ENCODE measurements at regions of chr5 and their contacts with region 1.

Region 1: DNA sequence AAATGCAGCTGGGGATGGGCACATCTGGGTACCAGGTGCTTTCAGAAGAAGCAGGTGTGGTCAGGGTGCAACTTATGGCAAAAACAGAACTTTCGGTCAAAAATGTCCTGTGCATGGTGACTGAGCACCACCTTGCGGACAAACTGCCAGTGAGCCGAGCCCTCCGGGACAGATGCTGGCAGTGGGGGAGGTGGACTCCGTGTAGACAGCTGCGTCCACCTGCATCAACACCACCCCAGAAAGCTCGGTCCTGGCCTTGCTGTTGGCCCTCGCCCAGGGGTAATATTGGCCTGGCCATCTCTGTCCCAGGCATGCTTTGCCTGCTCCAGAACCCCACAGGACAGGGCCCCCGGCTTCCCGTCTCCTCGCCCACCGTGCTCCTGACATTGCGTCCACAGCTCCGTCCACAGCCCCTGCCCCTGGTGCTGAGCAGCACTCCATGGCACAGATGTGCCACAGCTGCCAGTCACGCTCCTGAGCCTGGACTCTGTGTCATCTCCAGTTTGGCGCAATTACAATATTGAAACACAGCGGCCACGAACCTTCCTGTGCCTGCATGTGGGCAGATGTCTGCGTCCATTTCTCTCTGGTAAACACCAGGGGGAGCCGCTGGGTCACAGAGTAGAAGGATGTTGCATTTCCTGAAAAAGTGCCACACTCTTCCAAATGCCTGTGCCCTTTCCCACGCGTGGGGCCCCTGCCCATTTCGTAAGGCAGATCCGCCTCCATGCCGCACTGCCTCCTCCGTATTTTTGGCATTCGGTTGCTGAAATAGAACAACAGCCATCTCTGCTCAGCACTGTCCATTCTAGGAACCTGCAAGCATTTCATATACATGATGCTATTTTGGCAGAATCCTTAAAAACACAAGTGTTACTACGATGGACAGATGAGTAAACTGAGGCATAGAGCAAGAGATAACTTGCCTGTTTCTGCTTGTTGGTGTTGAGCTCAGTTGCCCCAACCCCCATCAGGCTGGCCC is 33.4 kb upstream of the SLC6A19 start:
- DNase-seq: peak; percentile 57
- ATAC-seq: peak; percentile 95
- H3K4me3 ChIP-seq: peak overlapping the region; percentile 42 to 47
- H3K27ac ChIP-seq: no peak overlapping the region
- H3K4me1 ChIP-seq: peaks cover 0 to 10% of the 10 kb centered on the region in 2 experiments; a peak in 2 of 4 replicates
- H3K27me3 ChIP-seq: no peaks in the 10 kb centered on the region
- CTCF ChIP-seq: peak; percentile 64 to 89 (median 87)
- POLR2A ChIP-seq: no peak
- RAD21 ChIP-seq: peak; percentile 95

Region 2: GRCh38 chr5:442335-443238 is 725.4 kb before region 1 on chr5 and contains the start of gene EXOC3:
- CTCF ChIA-PET with region 1: no interaction called
- POLR2A ChIA-PET with region 1: no interaction called
- RAD21 ChIA-PET with region 1: no interaction called
- intact Hi-C with region 1: loop called (anchors 10 kb)
- DNase-seq: peak; percentile 34
- ATAC-seq: peak; percentile 87
- H3K4me3 ChIP-seq: peak within 1 kb of the TSS; percentile 98 to 99
- H3K27ac ChIP-seq: peak within 1 kb of the TSS; percentile 86
- H3K4me1 ChIP-seq: peaks cover 12 to 30% of the 10 kb centered on the region in 2 experiments
- H3K27me3 ChIP-seq: no peaks in the 10 kb centered on the region
- CTCF ChIP-seq: no peak
- POLR2A ChIP-seq: peak; percentile 71
- RAD21 ChIP-seq: no peak
- total RNA-seq, gene EXOC3: 52.4 TPM

Region 3: GRCh38 chr5:923281-923873 is 244.6 kb before region 1 on chr5:
- CTCF ChIA-PET with region 1: interaction called, 16 read pairs
- POLR2A ChIA-PET with region 1: no interaction called
- RAD21 ChIA-PET with region 1: no interaction called
- intact Hi-C with region 1: loop called (anchors 1 kb)
- DNase-seq: peak; percentile 51
- ATAC-seq: peak; percentile 98
- H3K4me3 ChIP-seq: no peak overlapping the region
- H3K27ac ChIP-seq: no peak overlapping the region
- H3K4me1 ChIP-seq: 0 out of 4 replicates have a peak, but pooled peaks cover 0 to 3% of the 10 kb centered on the region in 2 experiments
- H3K27me3 ChIP-seq: no peaks in the 10 kb centered on the region
- CTCF ChIP-seq: peak; percentile 83 to 88 (median 86)
- POLR2A ChIP-seq: no peak
- RAD21 ChIP-seq: peak; percentile 95

Region 4: GRCh38 chr5:1004461-1005248 is 163.4 kb before region 1 on chr5:
- CTCF ChIA-PET with region 1: no interaction called
- POLR2A ChIA-PET with region 1: interaction called, 4 read pairs
- RAD21 ChIA-PET with region 1: no interaction called
- intact Hi-C with region 1: loop called (anchors 10 kb)
- DNase-seq: no peak
- ATAC-seq: peak; percentile 71
- H3K4me3 ChIP-seq: peak overlapping the region; percentile 33 to 57
- H3K27ac ChIP-seq: peak overlapping the region; percentile 17; the same call in 1 of the 2 replicates
- H3K4me1 ChIP-seq: peaks cover 31 to 51% of the 10 kb centered on the region in 2 experiments
- H3K27me3 ChIP-seq: peaks cover 20% of the 10 kb centered on the region; the same call in 1 of the 2 replicates
- CTCF ChIP-seq: peak in 2 of 3 experiments; percentile 39 to 44; a peak in 3 of 6 replicates
- POLR2A ChIP-seq: no peak
- RAD21 ChIP-seq: no peak

Region 5: DNA sequence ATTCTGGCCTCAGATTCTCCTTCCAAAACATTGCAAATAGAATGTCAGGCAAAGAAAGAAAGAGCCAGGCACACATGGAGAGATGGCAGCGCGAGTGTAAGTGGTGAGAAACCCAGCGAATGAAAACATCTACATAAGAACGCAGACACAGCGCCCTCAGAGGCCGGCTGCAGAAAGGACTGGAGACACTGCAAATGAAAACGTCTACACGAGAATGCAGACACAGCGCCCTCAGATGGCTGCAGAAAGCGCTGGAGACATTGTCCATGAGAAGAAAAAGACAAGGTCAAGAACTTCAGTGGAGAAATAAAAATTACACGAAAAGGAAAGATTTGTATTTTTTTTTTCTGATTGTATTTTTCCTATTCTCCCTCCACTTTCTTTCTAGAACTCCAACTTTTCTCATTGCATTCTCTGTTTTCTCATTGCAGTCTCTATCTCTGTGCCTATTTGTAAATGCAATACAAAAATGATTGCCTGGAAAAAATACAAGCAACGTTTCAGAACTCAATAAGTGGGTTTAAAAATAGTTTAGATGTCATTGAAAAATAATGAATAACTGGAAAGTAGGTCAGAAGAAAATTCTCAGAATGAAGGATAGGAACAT is 473.6 kb after region 1 on chr5:
- CTCF ChIA-PET with region 1: interaction called, 13 read pairs
- POLR2A ChIA-PET with region 1: no interaction called
- RAD21 ChIA-PET with region 1: no interaction called
- intact Hi-C with region 1: loop called (anchors 1 kb)
- DNase-seq: peak; percentile 83
- ATAC-seq: peak; percentile 86
- H3K4me3 ChIP-seq: no peak overlapping the region
- H3K27ac ChIP-seq: no peak overlapping the region
- H3K4me1 ChIP-seq: peaks cover 0 to 7% of the 10 kb centered on the region in 2 experiments; a peak in 2 of 4 replicates
- H3K27me3 ChIP-seq: peaks cover 9% of the 10 kb centered on the region; the same call in 1 of the 2 replicates
- CTCF ChIP-seq: peak; percentile 98 to 99 (median 98)
- POLR2A ChIP-seq: no peak
- RAD21 ChIP-seq: peak; percentile 80

Region 6: GRCh38 chr5:2066373-2066772 is 898.4 kb after region 1 on chr5:
- CTCF ChIA-PET with region 1: no interaction called
- POLR2A ChIA-PET with region 1: no interaction called
- RAD21 ChIA-PET with region 1: no interaction called
- intact Hi-C with region 1: no loop called
- DNase-seq: no peak
- ATAC-seq: no peak
- H3K4me3 ChIP-seq: no peak overlapping the region
- H3K27ac ChIP-seq: no peak overlapping the region
- H3K4me1 ChIP-seq: no peaks in the 10 kb centered on the region
- H3K27me3 ChIP-seq: peaks cover 33% of the 10 kb centered on the region
- CTCF ChIP-seq: no peak
- POLR2A ChIP-seq: no peak
- RAD21 ChIP-seq: no peak

Measured in HCT116 (cell line).